ENCODE measurements at regions of chr1 and their contacts with region 1.

Region 1: DNA sequence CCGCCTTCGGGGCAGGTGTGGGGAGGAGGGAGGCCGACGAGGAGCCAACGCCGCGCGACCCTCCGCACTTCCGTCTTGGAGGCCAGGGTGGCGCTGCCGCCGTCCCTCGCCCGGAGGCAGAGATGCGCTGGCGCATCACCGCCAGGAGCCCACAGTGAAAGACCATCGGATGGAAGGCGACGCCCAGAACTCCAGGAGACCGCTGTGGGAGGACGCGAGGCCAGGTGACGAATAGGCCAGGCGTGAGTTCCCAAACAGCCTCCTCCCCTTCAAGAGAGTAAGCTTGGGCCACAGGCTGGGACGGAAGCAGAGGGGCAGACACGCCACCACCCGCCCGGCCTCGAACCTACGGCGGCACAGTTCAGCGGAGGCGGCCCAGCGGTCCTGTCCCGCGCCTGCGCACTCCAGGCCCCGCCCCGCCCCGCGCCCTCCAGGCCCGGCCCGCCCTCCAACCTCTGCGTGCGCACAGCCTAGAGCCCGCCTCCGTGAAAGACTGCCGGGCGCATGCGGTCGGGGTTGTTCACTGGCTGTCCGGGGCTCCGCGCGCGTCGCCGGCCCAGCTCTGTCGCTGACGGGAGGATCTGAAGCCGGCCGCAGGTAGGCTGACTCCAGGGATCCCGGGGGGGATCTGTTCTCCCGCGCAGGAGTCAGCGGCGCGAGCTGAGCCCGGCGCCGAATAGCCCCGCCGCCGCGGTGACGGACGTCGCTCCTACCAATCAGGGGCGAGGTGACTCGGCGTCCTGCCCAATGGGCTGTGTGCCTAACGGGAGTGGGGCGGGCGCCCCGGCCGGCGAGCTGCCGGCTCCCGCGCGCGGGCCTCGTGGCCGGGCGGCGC is at the start of gene CTPS1:
- DNase-seq: peak; percentile 90
- H3K4me3 Mint-ChIP-seq: peak within 1 kb of the TSS; percentile 90
- H3K27ac Mint-ChIP-seq: peak within 1 kb of the TSS; percentile 97
- H3K4me1 Mint-ChIP-seq: peaks cover 45% of the 10 kb centered on the region
- H3K27me3 Mint-ChIP-seq: no peaks in the 10 kb centered on the region
- total RNA-seq, gene CTPS1: 172 and 174 TPM in 2 replicates

Region 2: DNA sequence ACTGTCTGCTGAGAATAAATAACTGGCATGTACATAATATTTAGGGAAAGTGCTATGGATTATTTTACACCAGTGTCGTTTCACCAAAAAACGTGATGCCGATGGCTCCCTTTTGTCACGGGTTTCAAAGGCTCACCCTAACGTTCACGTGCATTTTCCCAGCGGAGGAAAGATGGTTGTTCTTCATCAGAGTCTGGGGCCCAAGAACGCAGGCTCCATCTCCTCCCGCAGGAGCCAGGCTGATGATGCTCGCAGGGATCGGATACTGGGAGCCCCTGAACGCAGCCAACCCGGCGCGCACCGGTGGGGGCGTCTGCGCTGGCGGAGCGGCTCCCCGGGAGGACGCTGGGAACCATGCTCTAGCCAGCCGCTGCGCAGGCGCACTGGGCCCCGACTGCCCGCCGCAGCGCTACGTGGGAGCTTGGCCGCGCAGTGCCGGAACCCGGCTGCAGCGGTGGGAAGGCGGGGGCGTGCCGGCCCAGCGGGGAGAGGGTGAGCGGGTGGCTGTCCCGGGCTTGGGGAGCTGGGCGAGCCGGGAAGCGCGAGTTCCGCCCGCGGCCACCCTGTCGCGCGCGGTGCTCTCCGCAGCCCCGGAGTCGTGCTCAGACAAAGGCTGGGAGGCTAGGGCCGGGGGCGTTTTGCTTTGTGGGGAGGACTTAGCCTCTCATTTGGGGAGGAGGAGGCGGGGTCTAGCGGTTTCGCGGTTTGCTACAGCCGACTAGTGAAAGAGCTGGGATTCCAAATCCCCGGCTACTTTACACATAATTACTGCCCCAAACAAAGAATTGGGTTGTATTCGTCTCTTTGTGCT is 529.6 kb before region 1 on chr1 and contains the start of gene ZFP69B:
- intact Hi-C with region 1: loop called (anchors 10 kb)
- DNase-seq: peak; percentile 86
- H3K4me3 Mint-ChIP-seq: peak within 1 kb of the TSS; percentile 84
- H3K27ac Mint-ChIP-seq: peak within 1 kb of the TSS; percentile 90
- H3K4me1 Mint-ChIP-seq: peaks cover 35% of the 10 kb centered on the region
- H3K27me3 Mint-ChIP-seq: no peaks in the 10 kb centered on the region
- total RNA-seq, gene ZFP69B: 5.1 and 5.8 TPM in 2 replicates

Region 3: DNA sequence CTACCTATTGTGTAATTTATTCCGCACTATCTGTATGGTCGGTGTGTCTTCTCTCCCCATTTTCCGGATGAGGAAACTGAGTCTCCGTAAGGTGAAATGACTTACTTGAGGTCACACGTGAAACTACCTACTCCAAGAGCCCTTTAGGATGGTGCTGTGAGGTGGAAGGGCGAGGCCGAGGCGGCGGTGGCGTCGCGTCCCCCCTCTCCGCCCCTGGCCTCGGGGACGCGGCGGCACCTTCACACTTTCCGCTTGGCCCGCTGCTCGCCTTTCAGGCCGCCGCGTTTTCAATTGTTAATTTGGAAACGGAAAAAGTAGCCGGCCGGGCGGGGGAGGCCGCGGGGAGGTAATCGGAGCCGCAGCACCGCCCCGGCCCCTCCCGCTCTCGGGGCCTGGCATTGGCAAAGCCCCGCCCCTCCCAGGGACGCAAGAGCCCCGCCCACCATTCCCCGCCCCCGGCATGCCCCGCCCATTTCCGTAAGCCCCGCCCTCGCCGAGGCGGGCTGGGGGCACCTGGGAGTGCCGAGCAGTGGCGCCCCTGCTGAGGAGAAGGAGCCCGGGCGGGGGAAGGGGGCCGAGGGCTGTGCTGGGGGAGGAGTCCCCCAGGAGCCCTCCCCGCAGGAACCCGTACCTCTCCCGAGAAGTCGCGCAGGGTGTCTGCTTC is 177.2 kb before region 1 on chr1:
- intact Hi-C with region 1: loop called (anchors 5 kb)
- DNase-seq: peak; percentile 80
- H3K4me3 Mint-ChIP-seq: peak overlapping the region; percentile 37
- H3K27ac Mint-ChIP-seq: peak overlapping the region; percentile 34
- H3K4me1 Mint-ChIP-seq: peaks cover 33% of the 10 kb centered on the region
- H3K27me3 Mint-ChIP-seq: peaks cover 2% of the 10 kb centered on the region

Region 4: DNA sequence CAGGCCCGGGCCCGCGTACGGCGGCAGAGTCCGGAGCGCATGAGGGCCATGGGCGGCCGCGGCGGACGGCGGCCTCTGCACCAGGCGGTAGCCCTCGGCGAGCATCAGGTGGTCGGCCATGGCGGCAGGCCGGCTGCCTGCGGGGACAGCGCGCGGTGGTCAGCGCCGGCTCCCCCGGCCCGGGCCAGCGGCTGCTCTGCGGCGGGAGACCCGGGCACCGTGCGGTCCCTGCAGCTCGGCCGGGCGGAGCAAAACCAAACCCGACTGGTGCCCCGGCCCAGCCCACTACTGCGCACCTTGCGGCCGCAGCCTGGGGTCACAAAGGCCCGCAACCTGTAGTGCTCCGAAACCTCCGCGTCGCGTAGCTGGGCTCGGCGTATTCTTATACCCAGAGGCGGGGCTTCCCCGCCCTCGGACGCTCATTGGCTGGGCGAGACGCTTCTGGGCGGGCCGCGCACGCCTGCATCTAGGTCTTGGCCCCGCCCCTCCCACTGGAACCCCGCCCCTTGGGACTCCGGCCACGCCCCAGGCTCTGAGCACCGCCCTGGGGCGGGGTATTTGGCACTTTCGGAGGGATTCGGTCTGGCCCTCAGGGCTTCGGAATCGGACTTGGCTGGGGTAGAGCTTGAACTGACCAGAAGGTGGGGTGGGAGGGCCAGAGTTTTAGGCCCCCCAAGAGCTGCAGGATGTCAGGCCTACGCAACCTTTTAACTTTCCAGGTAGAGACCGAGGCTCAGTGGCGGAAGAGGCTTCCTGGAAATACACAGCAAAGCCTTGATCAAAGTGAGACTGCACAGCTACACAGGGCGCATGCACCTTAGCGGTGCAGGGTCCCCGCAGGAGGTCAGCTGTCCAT is 117.2 kb before region 1 on chr1 and contains the start of gene CITED4:
- intact Hi-C with region 1: loop called (anchors 1 kb)
- DNase-seq: peak; percentile 95
- H3K4me3 Mint-ChIP-seq: peak within 1 kb of the TSS; percentile 92
- H3K27ac Mint-ChIP-seq: peak within 1 kb of the TSS; percentile 97
- H3K4me1 Mint-ChIP-seq: peaks cover 24% of the 10 kb centered on the region
- H3K27me3 Mint-ChIP-seq: peaks cover 35% of the 10 kb centered on the region
- total RNA-seq, gene CITED4: 4.1 and 5.0 TPM in 2 replicates

Region 5: GRCh38 chr1:40951943-40952743 is 27.3 kb before region 1 on chr1:
- intact Hi-C with region 1: no loop called
- DNase-seq: peak; percentile 45
- H3K4me3 Mint-ChIP-seq: no peak overlapping the region
- H3K27ac Mint-ChIP-seq: no peak overlapping the region
- H3K4me1 Mint-ChIP-seq: peaks cover 8% of the 10 kb centered on the region
- H3K27me3 Mint-ChIP-seq: peaks cover 15% of the 10 kb centered on the region

Region 6: DNA sequence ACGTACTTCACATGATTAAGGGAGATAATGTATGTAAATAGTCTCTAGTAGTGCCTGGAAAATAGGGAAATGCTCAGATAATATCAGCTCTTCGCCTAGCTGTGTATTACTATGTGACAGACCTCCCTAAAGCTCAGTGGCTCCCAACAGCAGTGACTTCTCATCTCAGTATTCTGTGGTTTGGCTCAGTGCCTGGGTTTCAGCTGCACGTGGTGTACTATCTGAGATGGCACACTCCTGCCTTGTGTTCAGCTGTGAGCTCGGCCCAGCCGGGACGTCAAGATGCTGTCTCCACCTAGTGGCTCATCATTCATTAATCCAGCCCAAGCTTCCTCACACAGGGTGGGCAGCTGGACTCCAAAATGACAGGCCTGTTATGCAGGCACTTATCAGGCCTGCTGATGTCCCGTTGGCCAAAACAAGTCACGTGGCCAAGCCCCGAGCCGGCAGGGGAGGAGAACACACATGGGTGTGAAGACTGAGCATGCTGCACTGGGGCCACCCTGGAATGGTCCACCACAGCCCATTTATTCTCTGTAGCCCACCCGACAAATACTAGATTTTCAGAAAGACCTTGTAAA is 24.3 kb after region 1 on chr1:
- intact Hi-C with region 1: loop called (anchors 1 kb)
- DNase-seq: peak; percentile 66
- H3K4me3 Mint-ChIP-seq: no peak overlapping the region
- H3K27ac Mint-ChIP-seq: peak overlapping the region; percentile 61
- H3K4me1 Mint-ChIP-seq: peaks cover 23% of the 10 kb centered on the region
- H3K27me3 Mint-ChIP-seq: no peaks in the 10 kb centered on the region

Region 7: DNA sequence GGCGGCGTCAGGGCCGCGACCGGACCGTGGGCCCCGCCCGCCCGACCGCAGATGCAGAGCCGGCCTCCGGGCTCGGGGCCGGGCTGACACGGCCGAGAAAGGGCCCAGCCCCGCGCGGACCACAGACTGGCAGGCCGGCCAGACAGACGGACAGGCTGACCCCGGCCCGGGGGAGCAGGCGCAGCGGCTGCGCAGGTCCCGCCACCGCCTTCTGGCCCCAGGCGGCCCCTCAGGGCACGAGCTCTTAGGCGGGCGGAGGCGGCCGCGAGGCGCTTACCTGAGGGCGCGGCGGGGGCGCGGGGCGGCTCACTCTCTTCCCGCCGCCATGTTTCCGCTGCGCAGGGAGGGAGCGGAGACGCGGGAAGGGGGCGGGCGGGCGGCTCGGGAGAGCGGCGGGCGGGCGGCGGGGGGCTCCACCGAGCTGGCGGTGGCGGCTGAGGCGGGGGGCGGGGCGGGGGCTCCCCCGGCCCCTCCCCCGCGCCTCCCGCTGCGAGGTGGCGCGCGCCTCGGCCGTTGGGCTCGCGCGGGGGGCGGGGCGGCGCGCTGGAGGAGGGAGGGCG is 262.4 kb after region 1 on chr1 and contains the start of gene SCMH1:
- intact Hi-C with region 1: loop called (anchors 10 kb)
- DNase-seq: peak; percentile 47
- H3K4me3 Mint-ChIP-seq: peak within 1 kb of the TSS; percentile 86
- H3K27ac Mint-ChIP-seq: peak within 1 kb of the TSS; percentile 67
- H3K4me1 Mint-ChIP-seq: peaks cover 31% of the 10 kb centered on the region
- H3K27me3 Mint-ChIP-seq: no peaks in the 10 kb centered on the region
- total RNA-seq, gene SCMH1: 16.0 and 18.5 TPM in 2 replicates

Region 8: GRCh38 chr1:42456010-42456758 is 1476.7 kb after region 1 on chr1 and contains the starts of genes PPCS and ZMYND12:
- intact Hi-C with region 1: loop called (anchors 2 kb)
- DNase-seq: peak; percentile 87
- H3K4me3 Mint-ChIP-seq: peak within 1 kb of the TSS; percentile 95
- H3K27ac Mint-ChIP-seq: peak within 1 kb of the TSS; percentile 98
- H3K4me1 Mint-ChIP-seq: peaks cover 28% of the 10 kb centered on the region
- H3K27me3 Mint-ChIP-seq: no peaks in the 10 kb centered on the region
- total RNA-seq, gene PPCS: 40.1 and 48.0 TPM in 2 replicates
- total RNA-seq, gene ZMYND12: not detected in 2 replicates

Measured in activated T-helper 1 cell treated with anti-CD3 and anti-CD28 coated beads, Interleukin-12 subunit alpha, Interleukin-12 subunit beta, Interleukin-2, Interleukin-4 antibody, amounts not matched to agents 30 ng/mL and 10 ng/mL and 1 ng/mL, durations not matched to agents 14 hours and 24 hours and 36 hours (primary cell).